ENCODE measurements at regions of chr17 and their contacts with region 1.

Region 1: DNA sequence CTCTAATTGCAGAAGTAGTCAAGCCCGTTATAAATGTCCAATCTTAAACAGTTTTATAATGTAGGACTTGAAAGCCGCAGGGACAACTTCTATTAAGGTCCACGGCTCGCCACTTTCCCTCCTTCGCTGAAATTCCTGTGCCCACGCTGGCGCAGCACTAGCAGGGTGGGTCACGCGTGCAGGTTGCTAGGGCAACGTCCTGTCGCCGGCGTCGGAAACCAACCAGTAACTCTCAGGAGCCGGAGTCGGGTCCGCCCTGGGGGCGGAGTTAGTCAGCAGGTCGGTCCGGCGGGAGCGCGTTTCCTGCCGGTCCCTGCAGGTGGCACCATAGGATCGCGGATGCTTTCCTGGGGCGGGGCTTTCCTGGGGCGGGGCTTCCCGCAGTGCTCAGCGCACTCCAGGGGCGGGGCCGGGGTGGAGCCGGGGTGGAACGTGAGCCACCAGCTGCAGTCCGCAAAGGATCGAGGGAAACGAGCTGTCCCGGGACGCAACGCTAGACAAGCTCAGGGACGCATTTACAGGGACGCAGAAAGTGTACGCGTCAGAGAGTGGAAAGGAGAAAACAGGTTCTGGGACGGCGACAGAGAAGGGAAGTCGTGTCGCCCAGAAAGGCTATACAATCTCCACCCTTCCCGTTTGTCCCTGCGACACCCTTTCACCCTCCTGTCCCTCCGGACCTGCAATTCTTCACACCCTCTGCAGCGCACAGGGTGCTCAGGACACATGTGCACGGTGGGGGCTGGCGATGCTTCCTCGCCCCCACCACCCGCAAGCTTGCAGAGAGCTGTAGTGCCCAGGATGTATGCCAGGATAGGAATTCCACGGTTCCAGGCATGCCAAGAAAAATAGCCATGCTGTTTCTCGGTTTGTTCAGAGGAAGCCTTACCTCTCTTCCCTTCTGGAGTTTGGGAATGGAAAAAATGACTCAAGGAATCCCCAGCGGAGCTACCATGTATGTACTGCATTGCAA is 12.4 kb downstream of the COPZ2 start:
- DNase-seq: peak; percentile 94
- H3K27ac ChIP-seq: peak overlapping the region; percentile 98
- CTCF ChIP-seq: peak; percentile 93

Region 2: DNA sequence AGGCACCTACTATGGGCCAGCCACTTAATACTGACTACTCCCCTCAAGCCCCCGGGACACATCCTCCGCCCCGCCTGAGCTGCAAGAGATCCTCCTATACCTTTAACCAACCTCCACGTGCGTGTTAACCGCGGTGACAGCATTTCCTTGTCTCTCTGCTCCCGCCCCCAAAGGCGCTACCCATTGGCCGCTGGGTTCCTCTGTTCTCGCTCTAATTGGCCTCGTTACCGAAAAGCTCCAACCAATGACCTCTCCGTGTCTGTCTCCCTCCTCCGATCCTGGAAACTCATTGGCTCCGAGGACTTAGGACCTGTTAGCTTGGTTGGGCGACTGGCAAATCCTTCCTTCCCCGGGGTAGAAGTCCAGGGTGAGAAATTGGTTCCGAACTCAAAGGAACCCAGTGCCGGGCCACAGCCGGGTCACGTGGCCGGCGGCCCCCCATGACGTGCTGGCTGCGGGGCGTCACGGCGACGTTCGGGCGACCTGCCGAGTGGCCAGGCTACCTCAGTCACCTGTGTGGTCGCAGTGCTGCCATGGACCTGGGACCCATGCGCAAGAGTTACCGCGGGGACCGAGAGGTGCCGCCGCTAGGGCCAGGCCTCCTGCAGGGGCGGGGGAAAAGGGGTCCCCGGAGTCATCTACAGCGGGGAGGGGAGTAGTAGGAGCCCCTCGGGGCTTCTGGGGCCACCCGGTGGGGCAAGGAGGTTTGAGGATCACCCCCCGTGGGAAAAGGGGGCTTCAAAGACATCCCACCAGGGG is 83.8 kb before region 1 on chr17 and contains the start of gene PNPO:
- CTCF ChIA-PET with region 1: no interaction called
- POLR2A ChIA-PET with region 1: no interaction called
- DNase-seq: peak; percentile 99
- H3K27ac ChIP-seq: peak within 1 kb of the TSS; percentile 84
- CTCF ChIP-seq: no peak

Region 3: GRCh38 chr17:47987240-47987835 is 37.9 kb before region 1 on chr17:
- CTCF ChIA-PET with region 1: no interaction called
- POLR2A ChIA-PET with region 1: no interaction called
- DNase-seq: no peak
- H3K27ac ChIP-seq: no peak overlapping the region
- CTCF ChIP-seq: no peak

Region 4: DNA sequence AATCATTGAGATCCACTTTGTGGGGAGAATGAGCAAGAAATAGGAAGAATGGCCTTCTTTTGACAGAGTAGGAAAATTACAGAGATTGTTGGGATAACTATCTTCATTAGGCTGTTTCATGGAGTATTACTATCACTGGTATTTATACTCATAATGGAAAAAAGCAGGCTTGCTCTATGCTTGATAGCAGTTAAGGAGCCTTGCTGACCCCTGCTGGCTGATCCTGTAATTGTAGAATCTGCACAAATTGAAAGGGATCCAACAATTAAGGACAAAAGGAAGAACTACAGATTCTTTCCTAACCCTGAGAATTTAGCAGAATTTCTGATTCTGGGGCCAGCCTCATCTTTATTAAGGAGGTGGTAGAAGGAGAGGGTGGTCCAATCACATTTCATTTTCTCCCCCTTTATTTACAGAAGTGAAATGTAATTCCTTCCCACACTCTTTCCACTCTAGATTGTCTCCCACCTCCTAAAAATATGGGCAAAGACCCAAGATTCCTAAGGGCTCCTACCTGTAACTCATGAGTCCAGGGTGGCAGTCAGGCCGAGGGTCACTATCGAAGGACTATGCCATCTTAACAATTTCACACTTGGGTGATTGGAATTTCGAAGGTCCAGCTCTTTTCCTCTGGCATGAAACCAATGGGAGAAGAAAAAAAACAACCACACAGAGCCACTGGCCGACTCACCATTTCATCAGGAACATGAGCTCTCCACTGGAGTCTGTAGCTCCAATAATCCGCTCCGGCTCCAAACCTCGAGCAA is 49.3 kb after region 1 on chr17:
- CTCF ChIA-PET with region 1: interaction called, 16 read pairs
- POLR2A ChIA-PET with region 1: no interaction called
- DNase-seq: peak; percentile 53
- H3K27ac ChIP-seq: peak overlapping the region; percentile 61
- CTCF ChIP-seq: peak; percentile 86